ENCODE measurements at regions of chr18 and their contacts with region 1.

Region 1: DNA sequence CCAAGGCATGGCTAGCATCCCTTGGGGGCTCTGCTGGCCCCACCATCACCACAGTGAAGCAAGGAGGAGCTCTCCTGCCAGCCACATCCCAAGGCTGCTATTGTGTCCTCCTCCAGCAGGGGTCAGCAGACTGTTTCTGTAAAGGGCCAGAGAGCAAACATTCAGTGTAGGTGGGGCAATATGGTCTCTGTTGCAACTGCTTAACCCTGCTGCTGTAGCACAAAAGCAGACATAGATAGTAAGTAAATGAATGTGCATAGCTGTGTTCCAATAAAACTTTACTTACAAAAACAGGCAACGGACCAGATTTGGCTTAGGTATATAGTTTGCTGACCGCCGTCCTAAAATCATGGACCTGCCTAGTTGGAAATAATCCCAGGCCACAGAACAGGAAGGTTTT is 36.4 kb upstream of the ZBTB7C start:
- DNase-seq: peak in 9 of 10 donors; percentile 46 to 72 (median 62)
- H3K4me3 ChIP-seq: no peak overlapping the region
- H3K27ac ChIP-seq: no peak overlapping the region
- H3K27me3 ChIP-seq: no peaks in the 10 kb centered on the region
- CTCF ChIP-seq: peak; percentile 43 to 92 (median 82)

Region 2: DNA sequence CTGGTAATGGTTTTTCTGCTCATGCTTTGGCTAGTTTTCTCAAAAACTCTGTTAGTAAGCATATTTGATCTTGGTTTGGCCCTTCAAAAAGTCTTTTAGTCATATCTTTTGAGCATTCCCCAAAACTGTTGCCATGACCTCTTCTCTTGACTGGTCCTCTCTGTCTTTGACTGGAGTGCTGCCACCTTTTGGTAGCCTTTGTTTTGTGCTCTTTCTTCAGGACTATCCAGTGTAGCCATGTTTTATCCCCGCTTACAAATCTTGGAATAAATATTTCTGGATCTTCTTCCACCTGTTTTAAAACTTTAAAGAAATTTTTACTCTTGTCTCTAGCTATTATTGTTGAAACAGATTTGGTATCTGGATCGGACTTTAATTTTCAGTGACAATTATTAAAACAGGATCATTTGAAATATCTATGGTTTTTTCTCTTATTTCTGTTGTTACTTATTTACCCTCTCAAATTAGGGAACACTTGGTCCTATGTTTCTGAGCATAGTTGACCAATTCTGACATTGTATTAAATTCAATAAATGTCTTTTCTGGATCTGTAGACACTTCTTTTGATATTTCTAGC is 1409.2 kb before region 1 on chr18:
- intact Hi-C with region 1: no loop called
- DNase-seq: peak in 1 of 10 donors; percentile 18
- H3K4me3 ChIP-seq: no peak overlapping the region
- H3K27ac ChIP-seq: no peak overlapping the region
- H3K27me3 ChIP-seq: no peaks in the 10 kb centered on the region
- CTCF ChIP-seq: peak in 31 of 56 donors; percentile 7 to 47 (median 31)

Region 3: GRCh38 chr18:47772374-47773248 is 672.9 kb before region 1 on chr18:
- intact Hi-C with region 1: loop called (anchors 10 kb)
- DNase-seq: no peak
- H3K4me3 ChIP-seq: no peak overlapping the region
- H3K27ac ChIP-seq: no peak overlapping the region
- H3K27me3 ChIP-seq: peaks cover 0 to 2% (median 0%) of the 10 kb centered on the region in 45 donors
- CTCF ChIP-seq: peak in 52 of 56 donors; percentile 23 to 68 (median 49)

Region 4: DNA sequence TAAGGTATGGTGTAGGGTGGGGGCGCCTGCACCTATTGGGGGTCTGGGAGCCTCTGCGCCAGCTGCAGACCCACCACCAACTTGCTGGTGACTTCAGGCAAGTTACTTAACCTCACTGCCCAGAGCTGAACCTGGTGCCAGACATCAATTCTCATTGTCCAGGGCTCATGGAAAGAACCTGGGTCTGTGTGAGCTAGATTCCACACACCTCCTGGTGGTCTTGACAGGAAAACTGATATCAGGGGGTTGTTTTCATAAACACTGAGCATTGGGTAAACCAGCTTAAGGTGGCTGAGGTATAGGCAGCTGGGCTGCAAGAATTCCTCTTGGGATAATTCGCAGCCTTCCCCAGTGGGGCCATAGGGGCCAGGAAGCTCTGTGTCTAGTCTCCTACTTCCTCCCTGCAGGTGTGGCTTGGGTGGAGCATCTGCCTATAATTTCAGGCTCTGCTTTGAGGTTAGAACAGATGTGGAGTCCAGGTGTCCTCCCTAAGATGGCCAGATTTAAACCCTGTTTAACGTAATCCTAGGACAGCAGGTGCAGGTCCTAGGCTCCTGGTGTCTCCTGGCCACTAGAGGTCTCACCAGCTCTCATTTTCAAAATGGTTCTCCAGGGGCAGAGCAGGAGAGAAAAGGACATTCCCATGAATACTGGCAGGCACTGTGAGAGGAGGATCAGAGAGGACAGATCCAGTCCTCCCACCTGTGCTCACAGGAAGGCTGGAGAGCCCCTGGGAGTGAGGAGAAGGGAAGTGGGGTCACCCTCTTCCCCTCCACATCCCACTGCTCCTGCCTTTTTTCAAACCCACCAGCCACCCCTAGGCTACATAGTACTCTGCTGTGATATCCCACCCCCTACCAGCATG is 414.7 kb before region 1 on chr18:
- intact Hi-C with region 1: loop called (anchors 2 to 5 kb)
- DNase-seq: peak in 3 of 10 donors; percentile 27 to 59 (median 44)
- H3K4me3 ChIP-seq: no peak overlapping the region
- H3K27ac ChIP-seq: peak overlapping the region in 1 of 59 donors; percentile 38
- H3K27me3 ChIP-seq: no peaks in the 10 kb centered on the region
- CTCF ChIP-seq: peak; percentile 40 to 82 (median 68)

Region 5: GRCh38 chr18:48230467-48231113 is 214.9 kb before region 1 on chr18:
- intact Hi-C with region 1: loop called in 1 of 2 experiments (anchors 1 kb)
- DNase-seq: peak in 6 of 10 donors; percentile 46 to 71 (median 62)
- H3K4me3 ChIP-seq: no peak overlapping the region
- H3K27ac ChIP-seq: no peak overlapping the region
- H3K27me3 ChIP-seq: no peaks in the 10 kb centered on the region
- CTCF ChIP-seq: peak in 54 of 56 donors; percentile 23 to 71 (median 54)

Region 6: GRCh38 chr18:48295585-48296311 is 149.8 kb before region 1 on chr18:
- intact Hi-C with region 1: loop called in 1 of 2 experiments (anchors 5 kb)
- DNase-seq: peak in 2 of 10 donors; percentile 30 to 43
- H3K4me3 ChIP-seq: no peak overlapping the region
- H3K27ac ChIP-seq: no peak overlapping the region
- H3K27me3 ChIP-seq: no peaks in the 10 kb centered on the region
- CTCF ChIP-seq: peak in 39 of 56 donors; percentile 7 to 58 (median 35)

Region 7: DNA sequence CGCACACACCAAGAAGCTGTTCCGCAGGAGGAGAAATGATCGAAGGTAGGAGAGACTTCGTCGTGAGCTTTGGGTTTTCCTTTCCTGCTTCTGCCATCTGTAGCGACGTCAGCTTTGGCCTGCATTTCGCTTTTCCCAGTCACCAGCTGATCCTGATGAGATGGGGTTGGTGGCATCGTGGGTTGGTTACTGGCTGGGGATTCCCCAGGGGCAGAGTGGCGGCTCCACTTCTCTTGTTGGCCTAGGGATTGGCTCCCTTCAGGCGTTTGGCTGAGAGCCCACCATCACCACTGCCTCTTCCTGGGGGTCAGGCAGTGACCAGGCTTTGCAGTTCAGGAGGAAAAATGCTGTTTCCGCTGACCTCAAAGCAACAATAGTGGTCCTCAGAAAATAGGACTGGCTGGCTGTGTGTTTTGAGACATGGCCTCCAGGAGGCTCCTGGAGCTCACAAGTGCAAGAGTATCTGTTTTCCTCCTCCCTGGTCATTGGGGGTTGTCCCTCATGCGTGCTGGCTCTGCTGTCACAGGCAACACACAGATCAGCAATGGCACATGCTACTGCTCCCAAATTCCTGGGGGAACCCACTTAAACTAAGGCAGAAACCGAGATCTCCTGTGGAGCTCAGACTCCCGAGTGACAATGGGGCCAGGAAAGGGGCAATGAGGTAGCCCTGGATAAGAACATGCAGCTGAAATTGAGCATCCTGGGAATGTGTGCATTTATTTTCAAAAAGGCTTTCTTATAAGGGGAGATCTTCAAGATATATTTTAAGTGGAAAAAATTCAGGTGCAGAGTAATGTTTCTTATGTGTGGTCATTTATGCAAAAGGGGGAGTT is 266.3 kb after region 1 on chr18:
- intact Hi-C with region 1: no loop called
- DNase-seq: peak in 4 of 10 donors; percentile 52 to 66 (median 58)
- H3K4me3 ChIP-seq: peak overlapping the region in 1 of 59 donors; percentile 17
- H3K27ac ChIP-seq: peak overlapping the region in 29 of 59 donors; percentile 0 to 76 (median 36)
- H3K27me3 ChIP-seq: no peaks in the 10 kb centered on the region
- CTCF ChIP-seq: peak in 55 of 56 donors; percentile 20 to 74 (median 53)

Measured in dorsolateral prefrontal cortex (tissue), 120 donors.